Posterior vena cava (tissue), 2 donors: ENCODE measurements at regions of chr6 and their contacts with region 1.

Region 1: GRCh38 chr6:168884646-168885086 is 369.0 kb downstream of the THBS2 start:
- DNase-seq: peak; percentile 93

Region 2: GRCh38 chr6:167968091-167968490 is 916.6 kb before region 1 on chr6:
- intact Hi-C with region 1: no loop called
- DNase-seq: no peak

Region 3: GRCh38 chr6:168370310-168370991 is 514.2 kb before region 1 on chr6:
- intact Hi-C with region 1: loop called (anchors 1 to 2 kb)
- DNase-seq: peak; percentile 92

Region 4: DNA sequence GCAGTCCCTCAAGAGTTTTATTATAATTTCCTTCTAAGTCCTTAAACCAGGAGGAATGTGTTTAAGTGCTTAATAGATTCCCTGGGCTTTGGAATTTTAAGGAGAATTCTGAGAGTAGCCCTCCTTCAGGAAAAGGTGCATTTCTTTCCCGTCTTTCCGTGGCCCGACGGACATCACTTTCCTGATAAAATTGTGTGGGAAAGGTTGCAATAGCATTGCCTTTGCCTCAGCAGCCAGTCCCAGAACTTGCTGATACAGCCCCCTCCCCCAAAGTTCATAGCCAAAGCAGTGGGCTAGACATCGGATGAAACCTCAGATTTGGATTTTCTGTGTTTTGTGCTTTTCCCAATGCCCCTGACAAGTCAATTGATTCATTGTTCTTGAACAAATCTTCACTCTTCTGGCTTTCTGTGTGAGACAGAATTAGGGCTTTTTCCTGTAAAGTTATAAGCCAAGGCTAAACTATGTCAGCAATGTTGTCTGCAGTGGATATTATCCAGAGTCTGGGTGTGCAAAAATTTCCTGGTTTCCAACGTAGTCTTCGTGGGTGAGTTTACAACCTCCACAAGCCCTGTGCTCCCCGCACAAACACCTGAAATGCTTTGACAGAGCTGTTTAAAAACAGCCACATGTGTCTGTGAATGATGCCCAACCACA is 444.7 kb before region 1 on chr6:
- intact Hi-C with region 1: loop called in 1 of 2 experiments (anchors 10 kb)
- DNase-seq: no peak

Region 5: GRCh38 chr6:168616816-168617765 is 267.6 kb before region 1 on chr6:
- intact Hi-C with region 1: loop called in 1 of 2 experiments (anchors 10 kb)
- DNase-seq: peak; percentile 78